ENCODE measurements at regions of chr3 and their contacts with region 1.

Region 1: DNA sequence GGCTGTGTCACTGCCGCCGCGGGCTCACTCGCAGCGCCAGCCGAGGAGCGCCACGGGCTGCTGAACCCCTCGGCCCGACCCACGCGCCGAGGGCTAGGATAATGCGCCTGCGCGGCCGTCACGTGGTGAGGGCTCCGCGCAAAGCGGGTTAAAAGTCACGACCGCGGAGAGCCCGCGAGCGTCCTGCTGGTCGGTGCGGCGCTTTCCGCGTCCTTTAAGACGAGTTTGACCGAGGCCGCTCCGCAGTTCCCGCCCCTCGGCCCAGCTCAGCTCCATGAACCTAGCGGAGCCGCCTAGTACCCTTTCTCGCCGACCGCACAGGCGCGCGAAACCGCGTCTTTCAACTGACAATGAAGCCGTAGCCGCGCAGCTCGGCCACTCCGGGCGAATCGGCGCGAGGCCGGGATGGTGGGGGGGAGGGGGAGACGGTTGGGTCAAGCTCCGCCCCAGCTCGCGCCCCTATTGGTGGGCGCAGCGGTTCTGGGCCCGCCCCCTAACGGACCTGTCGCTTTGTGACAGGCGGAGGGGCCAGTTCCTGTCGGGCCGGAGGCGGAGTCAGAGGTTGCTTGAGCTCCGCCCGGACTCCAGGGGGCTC is 636 bp upstream of the STT3B start:
- DNase-seq: peak; percentile 96 to 99 (median 98)
- ATAC-seq: peak; percentile 91
- H3K4me3 ChIP-seq: peak overlapping the region; percentile 76
- H3K4me3 Mint-ChIP-seq: peak overlapping the region in 7 of 10 donors; percentile 96 to 100 (median 98)
- H3K27ac ChIP-seq: peak overlapping the region; percentile 94
- H3K27ac Mint-ChIP-seq: peak overlapping the region; percentile 95 to 99 (median 98)
- H3K4me1 ChIP-seq: peaks cover 4 to 31% of the 10 kb centered on the region in 2 donors
- H3K4me1 Mint-ChIP-seq: peaks cover 0 to 25% (median 18%) of the 10 kb centered on the region in 7 donors
- H3K27me3 ChIP-seq: no peaks in the 10 kb centered on the region
- H3K27me3 Mint-ChIP-seq: no peaks in the 10 kb centered on the region

Region 2: DNA sequence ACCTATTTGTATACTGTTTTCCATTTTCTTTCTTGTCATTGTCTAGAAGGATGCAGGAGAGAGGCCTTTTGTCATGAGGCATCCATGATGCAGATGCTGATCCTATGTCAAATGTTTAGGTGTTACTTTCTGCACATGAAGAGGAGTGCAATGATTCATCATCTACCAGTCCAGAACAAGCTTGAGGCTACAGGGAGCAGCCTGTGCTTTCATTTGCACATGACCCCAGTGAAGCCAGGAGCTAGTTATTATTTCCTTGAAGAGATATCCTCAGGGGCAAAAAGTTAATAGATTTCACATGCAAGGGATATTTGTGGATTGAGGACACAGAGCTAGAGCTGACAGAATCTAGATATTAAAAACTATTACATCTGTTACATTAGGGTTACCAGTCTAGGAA is 1130.1 kb before region 1 on chr3:
- CTCF ChIA-PET with region 1: no interaction called
- POLR2A ChIA-PET with region 1: no interaction called
- intact Hi-C with region 1: no loop called
- DNase-seq: no peak
- ATAC-seq: no peak
- H3K4me3 ChIP-seq: no peak overlapping the region
- H3K4me3 Mint-ChIP-seq: no peak overlapping the region
- H3K27ac ChIP-seq: no peak overlapping the region
- H3K27ac Mint-ChIP-seq: no peak overlapping the region
- H3K4me1 ChIP-seq: no peaks in the 10 kb centered on the region
- H3K4me1 Mint-ChIP-seq: peaks cover 5 to 32% (median 21%) of the 10 kb centered on the region in 7 donors
- H3K27me3 ChIP-seq: no peaks in the 10 kb centered on the region
- H3K27me3 Mint-ChIP-seq: no peaks in the 10 kb centered on the region

Region 3: DNA sequence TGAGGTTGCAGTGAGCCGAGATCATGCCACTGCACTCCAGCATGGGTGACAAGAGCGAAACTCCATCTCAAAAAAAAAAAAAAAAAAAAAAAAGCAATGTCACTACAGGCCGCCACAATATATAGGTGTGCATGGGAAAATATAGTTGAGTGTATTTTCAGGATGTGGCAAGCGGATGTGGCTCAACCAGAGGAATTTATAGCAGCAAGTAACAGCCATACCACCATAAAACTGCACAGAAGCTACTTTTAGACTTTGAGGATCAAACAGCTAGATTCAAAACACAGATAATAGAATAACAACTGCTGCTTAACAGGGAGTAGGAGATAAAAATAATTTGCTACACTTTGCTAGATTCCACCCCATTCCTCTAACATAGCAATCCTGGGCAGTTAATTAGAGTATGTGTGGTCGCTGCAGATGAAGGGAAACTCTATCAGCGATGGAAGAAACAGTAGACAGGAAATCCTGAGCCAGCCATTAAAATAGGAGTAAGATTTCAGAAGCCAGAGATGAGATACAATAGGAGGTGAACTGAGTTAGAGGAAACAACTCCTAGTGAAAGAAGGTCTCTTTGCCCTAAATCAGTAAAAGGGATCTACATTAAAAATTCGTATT is 318.1 kb before region 1 on chr3:
- CTCF ChIA-PET with region 1: no interaction called
- POLR2A ChIA-PET with region 1: interaction called, 7 read pairs
- intact Hi-C with region 1: loop called (anchors 1 to 2 kb)
- DNase-seq: peak in 7 of 9 donors; percentile 57 to 86 (median 76)
- ATAC-seq: peak; percentile 86
- H3K4me3 ChIP-seq: no peak overlapping the region
- H3K4me3 Mint-ChIP-seq: peak overlapping the region; percentile 34 to 82 (median 69)
- H3K27ac ChIP-seq: no peak overlapping the region
- H3K27ac Mint-ChIP-seq: peak overlapping the region; percentile 26 to 89 (median 64)
- H3K4me1 ChIP-seq: peaks cover 48 to 49% of the 10 kb centered on the region in 2 donors
- H3K4me1 Mint-ChIP-seq: peaks cover 53 to 99% (median 98%) of the 10 kb centered on the region in 7 donors
- H3K27me3 ChIP-seq: no peaks in the 10 kb centered on the region
- H3K27me3 Mint-ChIP-seq: peaks cover 0 to 2% (median 0%) of the 10 kb centered on the region in 5 donors

Region 4: DNA sequence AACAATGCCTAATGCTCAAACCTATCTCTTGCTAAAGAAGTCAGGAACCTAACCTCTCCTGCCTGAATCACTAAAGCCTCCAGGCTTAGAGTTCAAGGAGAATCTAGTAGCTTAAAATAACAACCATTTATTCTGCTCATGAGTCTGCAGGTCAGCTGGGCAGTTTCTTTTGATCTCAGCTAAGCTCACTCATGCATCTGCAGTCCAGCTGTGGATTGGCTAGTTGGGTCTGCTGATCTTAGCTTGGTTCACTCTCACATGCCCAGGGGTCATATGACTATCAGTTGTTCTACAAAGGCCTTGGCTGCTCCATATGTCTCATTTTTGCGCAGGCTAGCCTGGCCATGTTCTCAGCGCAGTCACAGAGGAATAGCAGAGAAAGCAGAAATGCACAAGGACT is 108.6 kb before region 1 on chr3:
- CTCF ChIA-PET with region 1: no interaction called
- POLR2A ChIA-PET with region 1: no interaction called
- intact Hi-C with region 1: loop called in 1 of 2 experiments (anchors 5 kb)
- DNase-seq: no peak
- ATAC-seq: no peak
- H3K4me3 ChIP-seq: no peak overlapping the region
- H3K4me3 Mint-ChIP-seq: no peak overlapping the region
- H3K27ac ChIP-seq: no peak overlapping the region
- H3K27ac Mint-ChIP-seq: no peak overlapping the region
- H3K4me1 ChIP-seq: peaks cover 6 to 9% of the 10 kb centered on the region in 2 donors
- H3K4me1 Mint-ChIP-seq: peaks cover 0 to 18% (median 12%) of the 10 kb centered on the region in 7 donors
- H3K27me3 ChIP-seq: no peaks in the 10 kb centered on the region
- H3K27me3 Mint-ChIP-seq: peaks cover 0 to 2% (median 0%) of the 10 kb centered on the region in 5 donors

Region 5: GRCh38 chr3:31581660-31582059 is 49.6 kb after region 1 on chr3:
- CTCF ChIA-PET with region 1: no interaction called
- POLR2A ChIA-PET with region 1: no interaction called
- intact Hi-C with region 1: no loop called
- DNase-seq: no peak
- ATAC-seq: no peak
- H3K4me3 ChIP-seq: no peak overlapping the region
- H3K4me3 Mint-ChIP-seq: peak overlapping the region in 6 of 10 donors; percentile 7 to 57 (median 38)
- H3K27ac ChIP-seq: no peak overlapping the region
- H3K27ac Mint-ChIP-seq: peak overlapping the region in 5 of 9 donors; percentile 27 to 82 (median 60)
- H3K4me1 ChIP-seq: peaks cover 9 to 17% of the 10 kb centered on the region in 2 donors
- H3K4me1 Mint-ChIP-seq: peaks cover 39 to 63% (median 42%) of the 10 kb centered on the region in 7 donors
- H3K27me3 ChIP-seq: no peaks in the 10 kb centered on the region
- H3K27me3 Mint-ChIP-seq: no peaks in the 10 kb centered on the region

Region 6: GRCh38 chr3:31610700-31611275 is 78.7 kb after region 1 on chr3:
- CTCF ChIA-PET with region 1: interaction called, 3 read pairs
- POLR2A ChIA-PET with region 1: no interaction called
- intact Hi-C with region 1: loop called in 1 of 2 experiments (anchors 5 kb)
- DNase-seq: no peak
- ATAC-seq: no peak
- H3K4me3 ChIP-seq: no peak overlapping the region
- H3K4me3 Mint-ChIP-seq: peak overlapping the region in 1 of 10 donors; percentile 36
- H3K27ac ChIP-seq: no peak overlapping the region
- H3K27ac Mint-ChIP-seq: peak overlapping the region in 5 of 9 donors; percentile 2 to 55 (median 17)
- H3K4me1 ChIP-seq: peaks cover 5 to 8% of the 10 kb centered on the region in 2 donors
- H3K4me1 Mint-ChIP-seq: peaks cover 46 to 90% (median 75%) of the 10 kb centered on the region in 7 donors
- H3K27me3 ChIP-seq: no peaks in the 10 kb centered on the region
- H3K27me3 Mint-ChIP-seq: no peaks in the 10 kb centered on the region

Region 7: DNA sequence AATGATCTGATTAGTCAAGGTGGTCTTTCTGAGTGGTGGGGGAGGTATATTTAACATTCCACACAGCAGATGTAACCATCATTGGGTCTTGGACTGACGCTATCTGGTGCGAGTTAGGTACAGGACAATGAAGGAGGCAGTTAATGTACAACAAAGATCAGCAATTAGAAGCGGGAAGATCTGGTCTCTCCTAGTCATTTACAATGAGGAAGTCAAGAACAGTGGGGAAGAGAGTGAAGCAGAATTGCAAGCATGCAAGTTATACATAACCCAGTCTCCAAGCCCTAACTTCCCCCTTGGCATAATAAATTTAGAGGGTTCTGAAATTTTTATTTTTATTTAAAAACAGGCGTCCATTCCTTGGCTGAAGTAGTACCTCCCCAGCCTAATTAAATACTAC is 588.4 kb after region 1 on chr3:
- CTCF ChIA-PET with region 1: no interaction called
- POLR2A ChIA-PET with region 1: interaction called, 4 read pairs
- intact Hi-C with region 1: loop called (anchors 1 to 2 kb)
- DNase-seq: no peak
- ATAC-seq: peak; percentile 67
- H3K4me3 ChIP-seq: no peak overlapping the region
- H3K4me3 Mint-ChIP-seq: no peak overlapping the region
- H3K27ac ChIP-seq: no peak overlapping the region
- H3K27ac Mint-ChIP-seq: no peak overlapping the region
- H3K4me1 ChIP-seq: peaks cover 4 to 23% of the 10 kb centered on the region in 2 donors
- H3K4me1 Mint-ChIP-seq: peaks cover 21 to 62% (median 53%) of the 10 kb centered on the region in 7 donors
- H3K27me3 ChIP-seq: no peaks in the 10 kb centered on the region
- H3K27me3 Mint-ChIP-seq: no peaks in the 10 kb centered on the region

Region 8: DNA sequence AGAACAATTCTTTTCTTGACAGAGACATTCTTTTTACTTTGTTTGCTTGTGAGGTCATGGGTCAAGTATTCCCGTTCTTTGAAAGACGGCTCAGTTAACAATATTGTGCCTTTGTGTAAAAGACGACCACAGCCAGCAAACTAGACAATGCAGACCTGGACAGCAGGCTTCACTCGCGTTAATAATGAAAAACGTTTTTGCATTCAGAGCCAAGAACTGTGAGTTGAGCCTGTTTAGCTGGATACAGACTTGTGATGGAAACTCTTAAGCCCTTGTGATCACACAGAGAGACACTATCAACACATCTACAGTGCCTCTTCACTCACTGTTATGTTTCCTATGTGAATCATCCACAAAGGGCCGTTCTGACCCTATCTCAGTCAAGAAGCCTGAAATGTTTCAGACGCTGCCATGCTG is 822.3 kb after region 1 on chr3:
- CTCF ChIA-PET with region 1: no interaction called
- POLR2A ChIA-PET with region 1: no interaction called
- intact Hi-C with region 1: no loop called
- DNase-seq: no peak
- ATAC-seq: no peak
- H3K4me3 ChIP-seq: no peak overlapping the region
- H3K4me3 Mint-ChIP-seq: no peak overlapping the region
- H3K27ac ChIP-seq: no peak overlapping the region
- H3K27ac Mint-ChIP-seq: no peak overlapping the region
- H3K4me1 ChIP-seq: no peaks in the 10 kb centered on the region
- H3K4me1 Mint-ChIP-seq: peaks cover under 1 to 22% (median 9%) of the 10 kb centered on the region in 7 donors
- H3K27me3 ChIP-seq: no peaks in the 10 kb centered on the region
- H3K27me3 Mint-ChIP-seq: no peaks in the 10 kb centered on the region

Region 9: GRCh38 chr3:32684800-32685542 is 1152.9 kb after region 1 on chr3 and contains the start of gene CNOT10:
- CTCF ChIA-PET with region 1: no interaction called
- POLR2A ChIA-PET with region 1: no interaction called
- intact Hi-C with region 1: loop called (anchors 1 to 2 kb)
- DNase-seq: peak; percentile 93 to 96 (median 95)
- ATAC-seq: peak; percentile 97
- H3K4me3 ChIP-seq: peak within 1 kb of the TSS; percentile 63
- H3K4me3 Mint-ChIP-seq: peak within 1 kb of the TSS; percentile 82 to 94 (median 92)
- H3K27ac ChIP-seq: peak within 1 kb of the TSS; percentile 86
- H3K27ac Mint-ChIP-seq: peak within 1 kb of the TSS; percentile 91 to 97 (median 96)
- H3K4me1 ChIP-seq: peaks cover 17 to 21% of the 10 kb centered on the region in 2 donors
- H3K4me1 Mint-ChIP-seq: peaks cover 25 to 44% (median 40%) of the 10 kb centered on the region in 7 donors
- H3K27me3 ChIP-seq: no peaks in the 10 kb centered on the region
- H3K27me3 Mint-ChIP-seq: peaks cover 0 to 5% (median 0%) of the 10 kb centered on the region in 5 donors
- total RNA-seq, gene CNOT10: 37.9 to 69.4 (median 46.9) TPM

Region 10: DNA sequence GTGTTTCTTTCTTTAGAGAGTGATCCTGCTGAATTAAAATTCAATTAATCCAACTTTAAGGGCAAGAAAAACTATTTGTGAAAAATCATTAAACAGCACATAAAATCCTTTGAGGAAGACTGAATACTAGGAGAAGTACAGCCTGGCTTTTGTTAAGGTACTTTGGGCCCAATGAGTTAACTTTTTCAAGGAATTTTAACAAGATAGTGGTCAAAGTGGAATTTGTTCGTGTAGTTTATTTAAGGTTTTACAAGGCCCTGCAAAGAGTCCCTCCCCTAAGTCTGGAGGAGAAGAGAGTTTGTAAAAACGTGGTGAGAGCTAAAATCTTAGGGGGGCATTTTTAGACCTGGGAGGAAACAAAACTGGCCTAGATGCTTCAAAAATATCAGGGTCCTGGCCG is 1259.7 kb after region 1 on chr3:
- CTCF ChIA-PET with region 1: no interaction called
- POLR2A ChIA-PET with region 1: no interaction called
- intact Hi-C with region 1: no loop called
- DNase-seq: no peak
- ATAC-seq: no peak
- H3K4me3 ChIP-seq: no peak overlapping the region
- H3K4me3 Mint-ChIP-seq: no peak overlapping the region
- H3K27ac ChIP-seq: no peak overlapping the region
- H3K27ac Mint-ChIP-seq: peak overlapping the region in 1 of 9 donors; percentile 82
- H3K4me1 ChIP-seq: no peaks in the 10 kb centered on the region
- H3K4me1 Mint-ChIP-seq: no peaks in the 10 kb centered on the region
- H3K27me3 ChIP-seq: no peaks in the 10 kb centered on the region
- H3K27me3 Mint-ChIP-seq: peaks cover 0 to 9% (median 8%) of the 10 kb centered on the region in 5 donors